PC-9 (cell line): ENCODE measurements at regions of chr9 and their contacts with region 1.

Region 1: DNA sequence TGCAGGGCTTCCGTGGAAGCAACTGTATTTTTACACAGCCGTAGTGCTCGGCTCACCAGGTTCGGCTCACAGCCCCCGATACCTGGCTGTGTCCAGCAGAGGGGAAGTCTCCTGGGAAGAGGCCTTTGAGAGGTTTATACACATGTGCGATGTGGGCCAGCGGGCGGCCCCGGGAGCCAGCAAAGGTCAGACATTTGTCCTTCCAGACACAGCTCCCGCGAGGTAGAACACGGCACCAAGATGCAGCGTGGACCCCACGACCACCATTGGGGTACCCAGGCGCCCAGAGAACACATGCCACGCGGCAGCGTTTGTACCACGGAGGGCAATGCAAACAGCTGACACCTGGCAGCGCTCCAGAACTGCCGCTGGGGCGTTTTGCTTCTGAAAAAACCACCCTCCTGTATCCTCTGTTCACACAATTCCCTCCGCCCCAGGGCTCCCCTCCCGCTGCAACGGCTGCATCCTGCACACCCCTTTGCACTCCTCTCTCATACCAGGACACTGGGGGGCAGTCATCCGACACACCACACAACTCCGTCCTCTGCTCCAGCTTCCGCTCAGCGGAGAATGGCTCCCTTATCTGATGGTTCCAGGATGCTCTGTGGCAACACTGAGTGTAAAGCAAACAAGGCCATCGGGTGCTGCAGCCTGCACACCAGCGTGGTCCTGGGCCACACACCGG is 235.3 kb downstream of the SYK start:
- DNase-seq: peak; percentile 84 to 87
- H3K4me3 ChIP-seq: no peak overlapping the region; the same call in 1 of the 2 replicates
- H3K27ac ChIP-seq: peak overlapping the region; percentile 92
- H3K4me1 ChIP-seq: peaks cover 51% of the 10 kb centered on the region
- H3K27me3 ChIP-seq: no peaks in the 10 kb centered on the region
- CTCF ChIP-seq: peak; percentile 68

Region 2: GRCh38 chr9:91060503-91061343 is 23.8 kb after region 1 on chr9:
- CTCF ChIA-PET with region 1: interaction called, 19 read pairs
- POLR2A ChIA-PET with region 1: no interaction called
- intact Hi-C with region 1: loop called (anchors 1 kb)
- DNase-seq: peak; percentile 78 to 93
- H3K4me3 ChIP-seq: peak overlapping the region; percentile 35; the same call in 1 of the 2 replicates
- H3K27ac ChIP-seq: peak overlapping the region; percentile 86
- H3K4me1 ChIP-seq: peaks cover 48% of the 10 kb centered on the region
- H3K27me3 ChIP-seq: no peaks in the 10 kb centered on the region
- CTCF ChIP-seq: no peak

Region 3: DNA sequence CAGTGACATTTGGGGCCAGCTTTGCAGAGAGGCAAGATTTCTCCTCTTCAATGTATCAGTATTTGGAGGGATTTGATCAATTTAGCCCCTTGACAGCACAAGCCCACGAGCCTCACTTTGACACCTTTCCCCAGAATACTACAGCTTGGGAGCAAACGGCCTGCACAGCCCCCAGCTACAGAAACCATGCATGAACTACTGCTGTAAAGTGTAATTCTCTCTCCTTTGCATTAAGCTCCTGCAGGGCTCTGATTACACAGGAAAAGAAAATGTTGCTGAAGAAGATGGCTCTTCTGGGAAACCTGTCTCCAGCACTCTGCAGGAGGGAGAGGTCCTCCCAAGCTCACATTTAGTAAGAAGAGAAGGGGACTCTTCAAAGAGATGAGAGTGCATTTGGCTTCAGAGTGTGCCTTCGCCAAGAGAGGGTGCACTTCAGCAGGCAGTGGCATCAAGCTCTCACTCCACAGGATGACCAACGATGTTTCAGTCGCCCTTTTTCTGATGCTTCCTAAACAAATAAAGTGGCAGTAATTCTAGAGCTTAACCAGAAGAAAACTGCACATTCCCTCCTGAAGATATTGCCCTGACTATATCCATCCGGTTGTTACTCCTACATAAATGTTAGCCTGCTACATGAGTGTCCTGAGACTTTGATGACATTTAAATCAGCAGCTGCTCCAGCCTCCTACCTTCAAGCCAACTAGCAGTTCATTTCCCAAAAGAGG is 52.6 kb after region 1 on chr9:
- CTCF ChIA-PET with region 1: no interaction called
- POLR2A ChIA-PET with region 1: no interaction called
- intact Hi-C with region 1: no loop called
- DNase-seq: peak in 1 of 2 experiments; percentile 21
- H3K4me3 ChIP-seq: no peak overlapping the region
- H3K27ac ChIP-seq: no peak overlapping the region
- H3K4me1 ChIP-seq: no peaks in the 10 kb centered on the region
- H3K27me3 ChIP-seq: no peaks in the 10 kb centered on the region
- CTCF ChIP-seq: peak; percentile 47

Region 4: GRCh38 chr9:91164724-91165520 is 128.0 kb after region 1 on chr9:
- CTCF ChIA-PET with region 1: no interaction called
- POLR2A ChIA-PET with region 1: no interaction called
- intact Hi-C with region 1: loop called (anchors 2 kb)
- DNase-seq: peak; percentile 91 to 92
- H3K4me3 ChIP-seq: no peak overlapping the region
- H3K27ac ChIP-seq: peak overlapping the region; percentile 51; the same call in 1 of the 2 replicates
- H3K4me1 ChIP-seq: peaks cover 59% of the 10 kb centered on the region
- H3K27me3 ChIP-seq: no peaks in the 10 kb centered on the region
- CTCF ChIP-seq: no peak

Region 5: DNA sequence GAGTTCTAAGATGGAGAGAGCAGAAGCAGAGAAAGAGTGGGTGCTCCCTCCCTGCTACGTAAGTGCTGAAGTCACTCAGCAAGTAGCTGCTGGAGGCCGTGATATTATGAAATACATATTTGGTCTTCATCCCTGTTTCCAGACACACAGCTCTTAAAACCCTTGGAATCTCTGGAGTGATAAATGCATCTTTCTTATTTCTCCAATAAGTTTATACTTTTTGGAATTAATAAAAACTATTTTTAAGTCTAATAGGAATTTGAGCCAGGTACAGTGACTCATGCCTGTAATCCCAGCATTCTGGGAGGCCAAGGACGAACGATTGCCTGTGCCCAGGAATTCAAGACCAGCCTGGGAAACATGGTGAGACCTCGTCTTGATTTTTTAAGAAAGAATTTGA is 264.2 kb after region 1 on chr9:
- CTCF ChIA-PET with region 1: no interaction called
- POLR2A ChIA-PET with region 1: no interaction called
- intact Hi-C with region 1: loop called (anchors 5 kb)
- DNase-seq: no peak
- H3K4me3 ChIP-seq: no peak overlapping the region
- H3K27ac ChIP-seq: no peak overlapping the region
- H3K4me1 ChIP-seq: peaks cover 71% of the 10 kb centered on the region
- H3K27me3 ChIP-seq: no peaks in the 10 kb centered on the region
- CTCF ChIP-seq: no peak

Region 6: GRCh38 chr9:91536211-91536691 is 499.3 kb after region 1 on chr9:
- CTCF ChIA-PET with region 1: no interaction called
- POLR2A ChIA-PET with region 1: no interaction called
- intact Hi-C with region 1: loop called (anchors 10 kb)
- DNase-seq: peak; percentile 39 to 80
- H3K4me3 ChIP-seq: no peak overlapping the region
- H3K27ac ChIP-seq: peak overlapping the region; percentile 46
- H3K4me1 ChIP-seq: peaks cover 36% of the 10 kb centered on the region
- H3K27me3 ChIP-seq: no peaks in the 10 kb centered on the region
- CTCF ChIP-seq: no peak